HepG2 (cell line): ENCODE measurements at regions of chr3 and their contacts with region 1.

Region 1: GRCh38 chr3:187811585-187812250 is 66.5 kb upstream of the BCL6 start:
- DNase-seq: no peak
- ATAC-seq: no peak
- H3K4me3 ChIP-seq: no peak overlapping the region
- H3K27ac ChIP-seq: no peak overlapping the region
- H3K4me1 ChIP-seq: peaks cover 50% of the 10 kb centered on the region
- H3K27me3 ChIP-seq: peaks cover 0 to 1% of the 10 kb centered on the region in 2 experiments; a peak in 1 of 5 replicates
- CTCF ChIP-seq: no peak
- EP300 ChIP-seq: no peak
- POLR2A ChIP-seq: no peak
- RAD21 ChIP-seq: no peak

Region 2: DNA sequence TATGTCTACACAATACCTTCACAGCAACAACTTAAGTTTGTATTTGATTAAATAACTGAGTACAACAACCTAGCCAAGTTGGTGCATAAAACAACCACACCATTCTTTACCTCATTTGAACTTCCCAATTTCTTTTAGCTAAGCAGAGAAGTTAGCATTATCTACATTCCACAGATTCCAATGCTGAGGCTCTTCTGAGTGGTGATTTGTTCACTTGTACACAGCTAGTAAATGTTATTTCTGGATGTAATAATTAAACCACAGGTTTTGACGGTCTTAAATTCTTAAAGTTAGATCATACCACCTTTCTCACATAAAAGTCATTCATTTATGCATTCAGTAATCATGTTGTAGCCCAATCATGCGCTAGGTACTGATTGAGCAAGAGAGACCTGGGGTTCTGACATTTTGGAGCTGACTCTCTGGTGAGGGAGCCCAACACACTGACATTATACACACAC is 244.0 kb before region 1 on chr3:
- CTCF ChIA-PET with region 1: no interaction called
- POLR2A ChIA-PET with region 1: no interaction called
- in situ Hi-C with region 1: no loop called
- intact Hi-C with region 1: no loop called
- DNase-seq: peak; percentile 7
- ATAC-seq: peak; percentile 48; the same call in 2 of the 3 replicates
- H3K4me3 ChIP-seq: no peak overlapping the region
- H3K27ac ChIP-seq: no peak overlapping the region
- H3K4me1 ChIP-seq: peaks cover 8% of the 10 kb centered on the region
- H3K27me3 ChIP-seq: no peaks in the 10 kb centered on the region; a peak in 1 of 5 replicates
- CTCF ChIP-seq: no peak
- EP300 ChIP-seq: no peak
- POLR2A ChIP-seq: no peak
- RAD21 ChIP-seq: no peak

Region 3: DNA sequence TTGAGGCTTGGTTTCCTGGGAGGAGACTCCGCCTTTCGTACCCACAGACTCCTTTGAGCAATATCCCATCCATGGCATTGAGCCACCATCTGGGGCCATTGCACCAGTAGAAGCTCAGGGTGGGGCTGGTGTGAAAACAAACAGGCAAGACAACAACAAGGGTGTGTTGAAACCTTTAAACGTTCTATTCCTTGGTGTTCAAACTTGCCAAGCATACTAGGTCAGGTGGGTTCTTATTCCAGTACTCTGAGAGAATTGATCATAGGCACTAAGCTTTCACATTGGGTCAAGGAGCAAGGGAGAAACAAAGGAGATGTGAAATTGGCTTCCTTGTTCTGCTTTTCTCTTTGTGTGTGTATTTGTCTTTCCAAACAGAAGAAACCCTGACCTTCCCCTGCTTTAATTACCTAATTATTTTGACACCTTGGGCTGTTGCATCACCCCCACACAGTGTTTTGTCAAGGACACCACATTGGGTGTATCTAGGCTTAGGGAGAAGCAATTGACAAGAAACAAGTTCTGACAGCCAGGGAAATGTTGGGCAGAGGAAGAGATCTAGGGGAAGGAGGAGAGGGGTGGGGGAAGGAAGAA is 38.7 kb after region 1 on chr3:
- CTCF ChIA-PET with region 1: no interaction called
- POLR2A ChIA-PET with region 1: no interaction called
- in situ Hi-C with region 1: no loop called
- intact Hi-C with region 1: loop called (anchors 1 kb)
- DNase-seq: peak; percentile 33
- ATAC-seq: peak; percentile 12; the same call in 1 of the 3 replicates
- H3K4me3 ChIP-seq: no peak overlapping the region
- H3K27ac ChIP-seq: no peak overlapping the region
- H3K4me1 ChIP-seq: peaks cover 46% of the 10 kb centered on the region
- H3K27me3 ChIP-seq: no peaks in the 10 kb centered on the region
- CTCF ChIP-seq: no peak
- EP300 ChIP-seq: peak in 1 of 2 experiments; percentile 34; a peak in 1 of 4 replicates
- POLR2A ChIP-seq: no peak
- RAD21 ChIP-seq: no peak